ENCODE measurements at regions of chr9 and their contacts with region 1.

Region 1: DNA sequence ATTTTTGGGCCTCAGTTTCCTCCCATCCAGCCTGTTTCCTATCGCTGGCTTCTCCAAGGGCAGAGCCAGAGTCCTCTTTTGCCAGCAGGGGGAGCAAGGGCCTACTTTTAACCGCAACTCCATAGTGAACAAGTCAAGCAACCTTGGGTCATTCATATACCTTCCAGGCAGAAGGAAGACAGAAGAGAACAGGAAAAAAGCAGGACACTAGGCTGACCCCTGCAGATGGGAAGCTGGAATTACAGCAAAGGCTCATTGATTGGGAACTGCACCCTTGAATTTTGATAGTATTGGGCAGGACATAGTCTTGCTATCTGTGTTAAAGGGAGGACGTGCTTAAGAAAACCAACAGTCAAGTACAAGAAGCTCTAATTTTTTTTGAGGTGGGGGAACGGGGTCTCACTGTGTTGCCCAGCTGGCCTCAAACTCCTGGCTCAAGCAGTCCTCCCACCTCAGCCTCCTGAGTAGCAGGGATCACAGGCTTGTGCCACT is 30.1 kb downstream of the QRFP start:
- DNase-seq: peak; percentile 70 to 74 (median 71)
- H3K4me3 ChIP-seq: no peak overlapping the region
- H3K27ac ChIP-seq: no peak overlapping the region
- H3K4me1 ChIP-seq: no peaks in the 10 kb centered on the region
- H3K27me3 ChIP-seq: no peaks in the 10 kb centered on the region

Region 2: GRCh38 chr9:130770679-130771442 is 95.7 kb before region 1 on chr9:
- CTCF ChIA-PET with region 1: interaction called, 101 read pairs
- POLR2A ChIA-PET with region 1: no interaction called
- DNase-seq: peak; percentile 81 to 85 (median 81)
- H3K4me3 ChIP-seq: no peak overlapping the region
- H3K27ac ChIP-seq: no peak overlapping the region
- H3K4me1 ChIP-seq: peaks cover 3 to 32% (median 20%) of the 10 kb centered on the region in 4 experiments
- H3K27me3 ChIP-seq: no peaks in the 10 kb centered on the region

Region 3: GRCh38 chr9:130852801-130853200 is 13.7 kb before region 1 on chr9:
- CTCF ChIA-PET with region 1: interaction called, 20 read pairs
- POLR2A ChIA-PET with region 1: no interaction called
- DNase-seq: no peak
- H3K4me3 ChIP-seq: no peak overlapping the region
- H3K27ac ChIP-seq: no peak overlapping the region
- H3K4me1 ChIP-seq: no peaks in the 10 kb centered on the region
- H3K27me3 ChIP-seq: no peaks in the 10 kb centered on the region

Region 4: DNA sequence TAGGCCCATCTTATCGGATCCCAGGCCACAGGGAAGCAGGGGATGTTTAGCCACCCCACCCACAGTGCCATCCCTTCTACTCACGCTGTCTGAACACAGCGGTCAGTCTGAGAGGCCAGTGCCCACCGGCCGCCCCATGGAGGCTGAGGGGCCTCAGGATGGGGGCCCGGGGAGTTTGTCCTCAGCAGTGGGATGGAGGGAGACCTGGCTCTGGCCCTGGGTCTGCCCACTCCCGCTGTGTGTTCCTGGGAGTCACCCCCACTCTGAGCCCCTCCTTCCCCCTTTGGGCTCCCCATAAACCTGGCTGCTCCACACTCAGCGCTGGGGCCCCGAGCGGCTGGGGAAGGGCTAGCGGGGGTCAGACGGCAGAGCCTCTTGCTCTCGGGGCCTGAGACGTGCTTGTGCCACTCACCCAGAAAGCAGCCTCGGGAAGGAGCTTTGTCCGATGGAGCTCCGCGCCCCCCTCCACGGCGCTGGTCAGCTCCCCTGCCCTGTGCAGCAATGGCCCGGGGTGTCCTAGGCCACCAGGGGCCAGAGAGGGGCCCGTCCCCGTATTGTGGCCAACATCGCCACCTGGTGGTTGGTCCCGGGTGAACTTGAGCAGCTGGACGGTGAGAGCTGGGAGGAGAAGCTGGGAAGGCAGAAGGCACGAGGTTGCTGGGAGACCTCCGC is 131.5 kb after region 1 on chr9:
- CTCF ChIA-PET with region 1: interaction called, 123 read pairs
- POLR2A ChIA-PET with region 1: interaction called, 5 read pairs
- DNase-seq: peak; percentile 49 to 69 (median 58)
- H3K4me3 ChIP-seq: no peak overlapping the region
- H3K27ac ChIP-seq: no peak overlapping the region
- H3K4me1 ChIP-seq: peaks cover 0 to 27% (median 15%) of the 10 kb centered on the region in 4 experiments
- H3K27me3 ChIP-seq: peaks cover 0 to 16% (median 0%) of the 10 kb centered on the region in 5 experiments

Region 5: DNA sequence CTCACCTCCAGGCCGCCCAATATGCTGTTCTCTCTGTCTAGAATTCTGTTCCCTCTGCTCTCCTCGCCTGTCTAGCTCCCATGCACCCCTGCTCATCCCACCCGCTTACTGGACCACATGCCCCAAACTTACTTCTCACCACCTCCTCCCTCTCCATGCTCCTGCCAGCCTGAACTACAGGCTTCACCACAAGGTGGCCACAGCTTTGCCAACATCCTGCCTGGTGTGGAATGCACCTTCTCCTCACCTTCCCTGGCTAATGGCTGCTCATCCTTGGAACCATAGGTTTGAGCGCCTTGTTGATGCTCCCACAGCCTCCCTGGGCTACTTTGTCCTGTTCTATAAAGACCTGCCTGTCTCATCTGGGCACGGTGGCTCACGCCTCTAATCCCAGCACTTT is 152.1 kb after region 1 on chr9:
- CTCF ChIA-PET with region 1: no interaction called
- POLR2A ChIA-PET with region 1: no interaction called
- DNase-seq: peak in 1 of 3 donors; percentile 18
- H3K4me3 ChIP-seq: no peak overlapping the region
- H3K27ac ChIP-seq: no peak overlapping the region
- H3K4me1 ChIP-seq: no peaks in the 10 kb centered on the region
- H3K27me3 ChIP-seq: peaks cover 0 to 12% (median 4%) of the 10 kb centered on the region in 5 experiments

Measured in common myeloid progenitor, CD34-positive (primary cell).